Activated B cell treated with CpG ODN at 0.5 μM for 24 hours (primary cell): ENCODE measurements at regions of chr12 and their contacts with region 1.

Region 1: DNA sequence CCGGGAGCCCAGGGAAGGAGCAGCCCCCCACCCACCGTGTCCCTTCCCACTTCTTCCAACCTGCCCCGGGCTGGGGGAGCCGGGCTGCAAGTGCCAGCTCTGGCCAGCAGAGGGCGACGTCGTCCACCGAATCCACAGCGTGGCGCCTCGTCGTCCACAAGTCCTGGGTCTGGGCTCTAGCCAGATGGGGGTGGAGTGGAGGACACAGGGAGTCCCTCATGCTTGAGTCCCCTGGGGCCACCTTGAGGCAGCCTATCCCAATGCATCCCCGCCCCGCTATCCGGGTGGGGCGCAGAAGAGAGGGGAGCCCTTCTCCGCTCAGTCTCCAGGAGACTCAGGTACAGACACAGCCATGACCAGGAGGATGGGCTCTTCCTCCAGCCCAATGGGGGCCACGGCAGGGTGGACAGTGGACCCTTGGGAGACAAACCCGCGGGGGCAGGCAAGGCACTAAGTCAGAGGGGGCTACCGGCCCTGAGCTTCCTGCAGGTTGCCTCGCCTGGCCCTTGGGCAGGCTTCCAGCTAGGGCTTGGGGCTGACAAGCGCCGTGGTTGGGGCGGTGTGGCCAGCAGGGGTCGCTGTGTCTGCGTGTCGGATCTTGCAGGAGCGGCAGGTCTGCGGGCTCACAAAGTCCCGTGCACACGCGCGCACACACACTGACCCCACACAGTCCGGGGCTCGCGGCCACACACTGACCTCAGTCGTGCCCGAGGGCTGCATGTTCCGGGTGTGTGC is 5.5 kb downstream of the AQP5 start:
- DNase-seq: peak; percentile 86
- ATAC-seq: peak; percentile 89
- H3K4me3 Mint-ChIP-seq: peak overlapping the region; percentile 71
- H3K27ac Mint-ChIP-seq: no peak overlapping the region
- H3K4me1 Mint-ChIP-seq: peaks cover 4% of the 10 kb centered on the region
- H3K27me3 Mint-ChIP-seq: peaks cover 39% of the 10 kb centered on the region
- CTCF ChIP-seq: peak; percentile 51

Region 2: DNA sequence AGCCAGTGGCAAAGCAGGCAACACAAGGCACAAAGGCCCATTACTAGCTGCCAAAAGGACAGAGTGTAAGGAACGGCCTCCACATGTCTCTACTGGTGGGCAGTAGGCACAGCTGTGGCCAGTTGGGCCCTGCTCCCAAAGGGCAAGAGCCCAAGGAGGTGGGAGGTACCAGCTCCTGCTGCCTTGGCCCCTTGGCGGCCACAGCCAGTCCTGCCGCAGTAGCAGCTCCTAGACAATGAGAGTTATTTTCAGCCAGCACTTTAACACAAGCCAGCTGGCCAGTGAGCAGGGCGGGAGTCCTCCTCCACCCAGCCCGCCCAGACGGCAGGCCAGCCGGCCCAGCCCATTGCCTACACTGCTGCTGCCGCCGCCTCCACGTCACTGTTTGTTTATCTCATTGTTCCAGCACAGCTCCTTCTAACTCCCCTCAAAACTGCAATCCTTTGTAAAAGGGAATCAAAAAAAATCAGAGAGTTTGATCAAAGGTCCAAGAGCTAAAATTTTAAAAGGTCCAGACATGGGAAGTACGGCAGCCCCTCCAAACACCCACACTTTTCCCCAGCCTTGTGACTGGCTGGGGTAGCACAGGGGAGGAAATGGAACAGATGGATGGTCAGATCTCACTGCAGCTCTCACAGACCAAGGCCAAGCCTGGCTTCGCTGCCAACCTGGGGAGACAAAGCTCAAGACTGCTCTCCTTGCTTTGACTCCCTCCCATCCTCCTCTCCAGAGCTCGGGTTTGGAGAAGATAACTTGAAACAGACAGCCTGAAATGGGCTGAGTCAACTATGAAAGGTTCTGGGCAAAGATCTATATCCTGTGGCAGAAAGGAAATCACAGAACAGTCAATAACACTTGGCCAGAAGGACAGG is 293.5 kb before region 1 on chr12:
- CTCF ChIA-PET with region 1: no interaction called
- POLR2A ChIA-PET with region 1: no interaction called
- intact Hi-C with region 1: no loop called
- DNase-seq: no peak
- ATAC-seq: no peak
- H3K4me3 Mint-ChIP-seq: peak overlapping the region; percentile 52
- H3K27ac Mint-ChIP-seq: peak overlapping the region; percentile 95
- H3K4me1 Mint-ChIP-seq: peaks cover 85% of the 10 kb centered on the region
- H3K27me3 Mint-ChIP-seq: no peaks in the 10 kb centered on the region
- CTCF ChIP-seq: no peak

Region 3: GRCh38 chr12:49945394-49946080 is 21.7 kb before region 1 on chr12:
- CTCF ChIA-PET with region 1: interaction called, 15 read pairs
- POLR2A ChIA-PET with region 1: no interaction called
- intact Hi-C with region 1: no loop called
- DNase-seq: peak; percentile 67
- ATAC-seq: peak; percentile 99
- H3K4me3 Mint-ChIP-seq: peak overlapping the region; percentile 77
- H3K27ac Mint-ChIP-seq: no peak overlapping the region
- H3K4me1 Mint-ChIP-seq: peaks cover 14% of the 10 kb centered on the region
- H3K27me3 Mint-ChIP-seq: peaks cover 6% of the 10 kb centered on the region
- CTCF ChIP-seq: peak; percentile 65

Region 4: DNA sequence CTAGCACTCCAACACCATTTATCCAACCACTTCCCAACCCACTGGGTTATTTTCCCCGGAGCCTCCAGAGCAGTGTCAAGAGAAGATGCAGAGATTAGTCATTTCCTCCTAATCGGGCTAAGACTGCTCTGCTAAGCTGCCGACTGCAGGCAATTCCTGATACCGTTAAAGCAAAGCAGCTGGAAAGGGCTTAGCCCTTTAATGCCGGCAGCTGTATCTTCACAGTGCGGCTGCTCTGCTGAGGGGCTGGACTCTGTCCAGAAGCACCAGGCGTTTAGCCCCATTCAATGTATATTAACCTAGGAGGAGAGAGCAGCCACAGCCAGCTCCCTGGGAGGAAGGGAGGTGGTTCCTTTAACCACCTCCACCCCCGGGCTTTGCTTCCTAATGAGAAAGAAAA is 16.7 kb after region 1 on chr12:
- CTCF ChIA-PET with region 1: interaction called, 12 read pairs
- POLR2A ChIA-PET with region 1: no interaction called
- intact Hi-C with region 1: no loop called
- DNase-seq: no peak
- ATAC-seq: no peak
- H3K4me3 Mint-ChIP-seq: no peak overlapping the region
- H3K27ac Mint-ChIP-seq: no peak overlapping the region
- H3K4me1 Mint-ChIP-seq: no peaks in the 10 kb centered on the region
- H3K27me3 Mint-ChIP-seq: no peaks in the 10 kb centered on the region
- CTCF ChIP-seq: no peak